Activated CD4-positive, alpha-beta T cell treated with anti-CD3 and anti-CD28 coated beads, Interleukin-2, amount 10 ng/mL, durations not matched to agents 7 days and 5 days (primary cell): ENCODE measurements at regions of chr17 and their contacts with region 1.

Region 1: DNA sequence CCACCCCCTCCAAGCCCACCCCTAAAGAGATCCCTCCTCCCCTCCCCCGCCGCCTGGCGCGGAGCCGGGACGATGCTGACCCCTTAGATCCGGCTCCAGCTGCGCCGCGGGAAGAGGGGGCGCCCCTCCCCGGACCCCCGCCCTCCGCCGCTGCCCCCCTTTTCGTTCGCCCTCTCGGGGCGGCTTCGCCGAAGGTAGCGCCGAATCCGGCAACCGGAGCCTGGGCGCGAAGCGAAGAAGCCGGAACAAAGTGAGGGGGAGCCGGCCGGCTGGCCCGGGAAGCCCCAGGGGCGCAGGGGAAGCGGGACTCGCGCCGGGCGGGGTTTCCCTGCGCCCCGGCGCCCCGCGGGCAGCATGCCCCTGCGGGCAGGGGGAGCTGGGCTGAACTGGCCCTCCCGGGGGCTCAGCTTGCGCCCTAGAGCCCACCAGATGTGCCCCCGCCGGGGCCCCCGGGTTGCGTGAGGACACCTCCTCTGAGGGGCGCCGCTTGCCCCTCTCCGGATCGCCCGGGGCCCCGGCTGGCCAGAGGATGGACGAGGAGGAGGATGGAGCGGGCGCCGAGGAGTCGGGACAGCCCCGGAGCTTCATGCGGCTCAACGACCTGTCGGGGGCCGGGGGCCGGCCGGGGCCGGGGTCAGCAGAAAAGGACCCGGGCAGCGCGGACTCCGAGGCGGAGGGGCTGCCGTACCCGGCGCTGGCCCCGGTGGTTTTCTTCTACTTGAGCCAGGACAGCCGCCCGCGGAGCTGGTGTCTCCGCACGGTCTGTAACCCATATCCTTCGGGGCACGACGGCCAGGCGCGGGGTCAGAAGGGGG is 623 bp downstream of the CACNA1G start:
- DNase-seq: peak; percentile 18
- H3K4me3 Mint-ChIP-seq: no peak overlapping the region
- H3K27ac Mint-ChIP-seq: no peak overlapping the region
- H3K4me1 Mint-ChIP-seq: peaks cover 20% of the 10 kb centered on the region
- H3K27me3 Mint-ChIP-seq: peaks cover 77% of the 10 kb centered on the region

Region 2: DNA sequence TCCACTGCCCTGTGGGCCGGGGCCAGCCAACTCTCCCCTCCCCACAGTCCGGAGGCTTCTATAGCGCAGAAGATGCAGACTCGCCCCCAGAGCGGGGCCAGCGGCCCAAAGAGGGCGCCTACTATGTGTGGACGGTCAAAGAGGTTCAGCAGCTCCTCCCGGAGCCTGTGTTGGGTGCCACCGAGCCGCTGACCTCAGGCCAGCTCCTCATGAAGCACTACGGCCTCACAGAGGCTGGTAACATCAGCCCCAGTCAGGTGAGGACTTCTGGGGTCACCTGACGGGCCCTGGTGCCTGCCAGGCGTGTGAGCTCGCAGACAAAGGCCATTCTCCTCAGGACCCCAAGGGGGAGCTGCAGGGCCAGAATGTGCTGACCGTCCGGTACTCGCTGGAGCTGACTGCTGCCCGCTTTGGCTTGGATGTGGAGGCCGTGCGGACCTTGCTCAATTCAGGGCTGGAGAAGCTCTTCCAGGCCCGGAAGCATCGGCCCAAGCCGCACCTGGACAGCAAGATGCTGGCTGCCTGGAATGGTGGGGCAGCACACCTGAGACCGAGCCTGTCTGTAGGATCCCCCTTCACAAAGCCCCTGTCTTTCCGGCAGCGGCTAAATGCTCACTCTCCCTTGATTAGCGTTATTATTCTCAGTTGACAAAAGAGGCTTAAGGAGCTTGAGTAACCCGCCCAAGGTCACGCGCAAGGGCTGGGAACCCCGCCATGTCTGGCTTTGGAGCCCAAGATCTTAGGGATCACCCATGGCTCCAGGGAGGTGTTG is 10.3 kb before region 1 on chr17:
- CTCF ChIA-PET with region 1: interaction called, 13 read pairs
- POLR2A ChIA-PET with region 1: no interaction called
- DNase-seq: no peak
- H3K4me3 Mint-ChIP-seq: no peak overlapping the region
- H3K27ac Mint-ChIP-seq: no peak overlapping the region
- H3K4me1 Mint-ChIP-seq: peaks cover 9% of the 10 kb centered on the region
- H3K27me3 Mint-ChIP-seq: peaks cover 4% of the 10 kb centered on the region